Heart right ventricle (tissue), 16 donors: ENCODE measurements at regions of chr17 and their contacts with region 1.

Region 1: DNA sequence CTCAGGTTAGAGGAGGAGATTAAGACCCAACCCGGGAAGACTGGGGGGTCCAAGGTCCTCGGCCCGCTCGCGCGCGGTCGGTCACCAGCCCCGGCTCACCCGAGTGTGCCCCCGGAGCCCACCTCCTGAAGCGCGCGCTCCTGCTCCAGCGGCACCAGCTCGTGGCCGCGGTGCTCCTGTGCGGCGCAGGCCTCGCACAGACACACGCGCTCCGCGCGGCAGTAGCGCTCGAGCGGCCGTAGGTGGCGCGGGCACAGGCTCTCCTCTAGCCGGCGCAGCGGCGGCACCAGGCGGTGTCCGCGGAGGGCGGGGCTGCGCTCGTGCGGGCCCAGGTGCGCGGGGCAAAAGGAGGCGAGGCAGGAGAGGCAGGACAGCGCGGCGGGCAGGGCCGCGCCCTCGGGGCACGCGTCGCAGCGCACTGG is 618 bp downstream of the TRIM47 start:
- DNase-seq: peak; percentile 66 to 77
- ATAC-seq: peak; percentile 21 to 75 (median 58)
- H3K4me3 ChIP-seq: peak overlapping the region; percentile 58 to 87 (median 72)
- H3K27ac ChIP-seq: peak overlapping the region; percentile 77 to 100 (median 96)
- H3K4me1 ChIP-seq: peaks cover 29 to 52% (median 43%) of the 10 kb centered on the region in 9 donors
- H3K27me3 ChIP-seq: peaks cover 0 to 18% (median 0%) of the 10 kb centered on the region in 7 donors
- CTCF ChIP-seq: peak; percentile 19 to 55 (median 44)

Region 2: GRCh38 chr17:75779231-75779986 is 98.4 kb before region 1 on chr17:
- intact Hi-C with region 1: loop called in 5 of 10 experiments (anchors 2 to 10 kb)
- DNase-seq: peak; percentile 94 to 98
- ATAC-seq: peak; percentile 82 to 87 (median 86)
- H3K4me3 ChIP-seq: peak overlapping the region; percentile 78 to 94 (median 88)
- H3K27ac ChIP-seq: peak overlapping the region; percentile 92 to 99 (median 99)
- H3K4me1 ChIP-seq: peaks cover 9 to 68% (median 52%) of the 10 kb centered on the region in 9 donors
- H3K27me3 ChIP-seq: no peaks in the 10 kb centered on the region
- CTCF ChIP-seq: no peak

Region 3: GRCh38 chr17:75784473-75785015 is 93.2 kb before region 1 on chr17 and contains the start of gene UNK:
- intact Hi-C with region 1: loop called in 5 of 10 experiments (anchors 2 to 10 kb)
- DNase-seq: peak; percentile 94 to 99
- ATAC-seq: peak; percentile 91 to 95 (median 93)
- H3K4me3 ChIP-seq: peak within 1 kb of the TSS; percentile 51 to 78 (median 70)
- H3K27ac ChIP-seq: peak within 1 kb of the TSS; percentile 97 to 100 (median 99)
- H3K4me1 ChIP-seq: peaks cover 7 to 73% (median 39%) of the 10 kb centered on the region in 9 donors
- H3K27me3 ChIP-seq: no peaks in the 10 kb centered on the region
- CTCF ChIP-seq: no peak
- total RNA-seq, gene UNK: 11.6 to 19.1 (median 14.7) TPM

Region 4: GRCh38 chr17:75845049-75845860 is 32.5 kb before region 1 on chr17:
- intact Hi-C with region 1: loop called in 1 of 10 experiments (anchors 1 kb)
- DNase-seq: peak; percentile 86 to 87
- ATAC-seq: peak; percentile 66 to 81 (median 79)
- H3K4me3 ChIP-seq: peak overlapping the region in 3 of 10 donors; percentile 19 to 64 (median 33)
- H3K27ac ChIP-seq: peak overlapping the region; percentile 65 to 97 (median 88)
- H3K4me1 ChIP-seq: peaks cover 40 to 68% (median 61%) of the 10 kb centered on the region in 9 donors
- H3K27me3 ChIP-seq: no peaks in the 10 kb centered on the region
- CTCF ChIP-seq: peak; percentile 69 to 86 (median 83)

Region 5: GRCh38 chr17:75855310-75856081 is 22.3 kb before region 1 on chr17 and contains the start of gene WBP2:
- intact Hi-C with region 1: loop called in 1 of 10 experiments (anchors 2 kb)
- DNase-seq: peak; percentile 94 to 99
- ATAC-seq: peak; percentile 90 to 96 (median 93)
- H3K4me3 ChIP-seq: peak within 1 kb of the TSS; percentile 79 to 97 (median 83)
- H3K27ac ChIP-seq: peak within 1 kb of the TSS; percentile 96 to 99 (median 98)
- H3K4me1 ChIP-seq: peaks cover 27 to 76% (median 61%) of the 10 kb centered on the region in 9 donors
- H3K27me3 ChIP-seq: no peaks in the 10 kb centered on the region
- CTCF ChIP-seq: peak; percentile 17 to 77 (median 54)
- total RNA-seq, gene WBP2: 130 to 210 (median 173) TPM

Region 6: GRCh38 chr17:76014184-76014924 is 136.6 kb after region 1 on chr17:
- intact Hi-C with region 1: no loop called
- DNase-seq: peak; percentile 54 to 68
- ATAC-seq: peak; percentile 65 to 88 (median 82)
- H3K4me3 ChIP-seq: no peak overlapping the region
- H3K27ac ChIP-seq: no peak overlapping the region
- H3K4me1 ChIP-seq: peaks cover 0 to 6% (median 4%) of the 10 kb centered on the region in 9 donors
- H3K27me3 ChIP-seq: peaks cover 0 to 12% (median 0%) of the 10 kb centered on the region in 7 donors
- CTCF ChIP-seq: peak; percentile 89 to 98 (median 95)